MCF 10A (cell line): ENCODE measurements at regions of chr6 and their contacts with region 1.

Region 1: DNA sequence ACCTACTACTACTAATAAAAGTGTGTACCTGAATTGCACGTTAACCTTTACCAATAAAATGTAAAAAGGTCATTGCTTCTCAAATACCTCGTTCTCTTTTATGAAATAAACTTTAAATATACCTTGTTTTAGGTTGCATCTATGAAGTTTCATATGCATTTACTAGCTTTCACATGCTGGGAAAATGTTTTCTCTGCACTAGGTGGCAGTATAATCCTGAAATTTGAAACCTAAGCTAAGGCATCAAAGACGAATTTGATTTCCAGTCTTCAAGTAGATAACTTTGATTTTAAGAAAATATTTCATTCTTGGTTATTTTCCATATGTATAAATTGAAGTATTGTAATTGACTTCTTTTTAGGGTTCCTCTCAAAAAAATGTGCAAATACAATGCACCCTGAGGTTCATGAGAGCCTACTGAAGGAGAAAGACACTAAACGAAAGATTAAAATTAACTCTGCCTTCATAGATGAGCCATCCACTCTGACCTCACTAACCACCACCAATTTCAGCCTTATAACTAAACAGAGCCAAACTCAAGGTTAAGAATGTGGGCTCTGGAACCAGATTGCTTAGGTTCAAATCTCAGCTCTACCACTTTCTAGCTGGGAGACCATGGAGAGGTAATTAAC is 7.3 kb upstream of the COL9A1 start:
- DNase-seq: peak; percentile 58
- H3K4me3 Mint-ChIP-seq: no peak overlapping the region
- H3K27ac Mint-ChIP-seq: no peak overlapping the region
- H3K4me1 Mint-ChIP-seq: peaks cover 15% of the 10 kb centered on the region
- H3K27me3 Mint-ChIP-seq: peaks cover 88% of the 10 kb centered on the region
- CTCF ChIP-seq: peak; percentile 43

Region 2: GRCh38 chr6:70336996-70337742 is 27.0 kb after region 1 on chr6:
- CTCF ChIA-PET with region 1: interaction called, 18 read pairs
- POLR2A ChIA-PET with region 1: no interaction called
- intact Hi-C with region 1: no loop called
- DNase-seq: no peak
- H3K4me3 Mint-ChIP-seq: no peak overlapping the region
- H3K27ac Mint-ChIP-seq: no peak overlapping the region
- H3K4me1 Mint-ChIP-seq: no peaks in the 10 kb centered on the region
- H3K27me3 Mint-ChIP-seq: peaks cover 94% of the 10 kb centered on the region
- CTCF ChIP-seq: no peak

Region 3: GRCh38 chr6:70375882-70376281 is 65.7 kb after region 1 on chr6:
- CTCF ChIA-PET with region 1: interaction called, 233 read pairs
- POLR2A ChIA-PET with region 1: no interaction called
- intact Hi-C with region 1: no loop called
- DNase-seq: peak; percentile 27
- H3K4me3 Mint-ChIP-seq: no peak overlapping the region
- H3K27ac Mint-ChIP-seq: no peak overlapping the region
- H3K4me1 Mint-ChIP-seq: peaks cover 24% of the 10 kb centered on the region
- H3K27me3 Mint-ChIP-seq: peaks cover 11% of the 10 kb centered on the region
- CTCF ChIP-seq: no peak

Region 4: GRCh38 chr6:70520575-70520974 is 210.4 kb after region 1 on chr6:
- CTCF ChIA-PET with region 1: interaction called, 15 read pairs
- POLR2A ChIA-PET with region 1: no interaction called
- intact Hi-C with region 1: loop called (anchors 5 kb)
- DNase-seq: peak; percentile 13
- H3K4me3 Mint-ChIP-seq: no peak overlapping the region
- H3K27ac Mint-ChIP-seq: no peak overlapping the region
- H3K4me1 Mint-ChIP-seq: no peaks in the 10 kb centered on the region
- H3K27me3 Mint-ChIP-seq: no peaks in the 10 kb centered on the region
- CTCF ChIP-seq: peak; percentile 46

Region 5: DNA sequence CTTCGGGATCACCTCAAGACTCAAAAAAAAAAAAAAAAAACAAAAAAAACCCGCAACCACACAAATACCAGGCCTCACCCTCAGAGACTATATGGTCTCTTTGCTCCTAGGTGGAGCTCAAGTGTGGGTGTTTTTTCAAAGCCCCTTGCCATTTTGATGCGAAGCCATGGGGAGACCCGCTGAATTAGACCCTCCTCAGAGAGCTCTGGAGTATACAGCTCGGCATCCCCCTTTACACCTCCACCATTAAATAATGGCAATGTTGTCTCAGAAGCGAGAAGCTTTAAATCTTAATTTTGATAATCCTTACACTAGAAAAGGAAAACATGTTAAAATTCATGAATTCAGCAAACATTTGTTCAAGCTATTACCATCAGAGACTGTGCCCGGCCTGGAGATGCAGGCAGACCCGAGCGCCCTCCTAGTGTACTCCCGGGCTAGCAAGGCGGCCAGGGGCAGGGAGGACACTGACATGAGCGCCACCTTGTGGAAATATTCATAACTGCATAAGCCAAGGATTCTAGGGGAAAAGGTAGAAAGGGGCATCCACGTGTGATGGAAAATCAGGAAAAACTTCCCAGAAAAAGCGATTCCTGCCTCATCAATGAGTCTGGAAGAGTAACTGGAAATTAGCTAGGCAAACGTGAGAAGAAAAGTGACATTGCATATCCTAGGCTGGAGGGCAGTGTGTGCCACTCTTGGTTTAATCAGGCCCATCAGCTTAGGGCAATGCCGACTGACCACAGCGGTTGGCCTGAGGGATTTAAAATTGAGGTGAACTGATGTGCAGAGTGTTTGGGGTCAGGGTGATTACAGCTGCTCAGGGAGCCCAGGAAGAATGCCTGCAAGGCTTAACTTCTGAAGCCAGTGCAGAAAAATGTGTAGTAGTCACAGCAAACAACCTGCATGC is 574.1 kb after region 1 on chr6:
- CTCF ChIA-PET with region 1: interaction called, 11 read pairs
- POLR2A ChIA-PET with region 1: no interaction called
- intact Hi-C with region 1: loop called (anchors 1 kb)
- DNase-seq: peak; percentile 68
- H3K4me3 Mint-ChIP-seq: no peak overlapping the region
- H3K27ac Mint-ChIP-seq: no peak overlapping the region
- H3K4me1 Mint-ChIP-seq: no peaks in the 10 kb centered on the region
- H3K27me3 Mint-ChIP-seq: peaks cover 57% of the 10 kb centered on the region
- CTCF ChIP-seq: peak; percentile 87